ENCODE measurements at regions of chr14 and their contacts with region 1.

Region 1: DNA sequence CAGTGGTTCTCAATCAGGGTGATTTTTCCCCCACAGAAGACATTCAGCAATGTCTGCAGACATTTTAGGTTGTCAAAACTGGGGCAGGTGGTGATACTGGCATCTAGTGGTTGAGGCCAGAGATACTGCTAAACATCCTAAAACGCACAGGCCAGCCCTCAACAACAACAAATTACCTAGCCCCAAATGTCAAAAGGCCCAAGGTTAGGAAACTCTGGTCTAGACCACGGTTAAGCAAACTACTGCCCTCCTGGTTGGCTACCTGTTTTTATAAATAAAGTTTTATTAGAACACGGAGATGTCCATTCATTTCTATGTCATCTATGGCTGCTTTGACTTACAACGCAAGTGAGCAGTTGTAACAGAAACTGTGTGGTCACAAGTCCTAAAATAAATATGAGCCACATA is 186.7 kb downstream of the EFCAB11 start:
- DNase-seq: peak; percentile 46
- H3K4me3 Mint-ChIP-seq: no peak overlapping the region
- H3K27ac Mint-ChIP-seq: peak overlapping the region; percentile 35
- H3K4me1 Mint-ChIP-seq: peaks cover 15% of the 10 kb centered on the region
- H3K27me3 Mint-ChIP-seq: peaks cover 19% of the 10 kb centered on the region

Region 2: DNA sequence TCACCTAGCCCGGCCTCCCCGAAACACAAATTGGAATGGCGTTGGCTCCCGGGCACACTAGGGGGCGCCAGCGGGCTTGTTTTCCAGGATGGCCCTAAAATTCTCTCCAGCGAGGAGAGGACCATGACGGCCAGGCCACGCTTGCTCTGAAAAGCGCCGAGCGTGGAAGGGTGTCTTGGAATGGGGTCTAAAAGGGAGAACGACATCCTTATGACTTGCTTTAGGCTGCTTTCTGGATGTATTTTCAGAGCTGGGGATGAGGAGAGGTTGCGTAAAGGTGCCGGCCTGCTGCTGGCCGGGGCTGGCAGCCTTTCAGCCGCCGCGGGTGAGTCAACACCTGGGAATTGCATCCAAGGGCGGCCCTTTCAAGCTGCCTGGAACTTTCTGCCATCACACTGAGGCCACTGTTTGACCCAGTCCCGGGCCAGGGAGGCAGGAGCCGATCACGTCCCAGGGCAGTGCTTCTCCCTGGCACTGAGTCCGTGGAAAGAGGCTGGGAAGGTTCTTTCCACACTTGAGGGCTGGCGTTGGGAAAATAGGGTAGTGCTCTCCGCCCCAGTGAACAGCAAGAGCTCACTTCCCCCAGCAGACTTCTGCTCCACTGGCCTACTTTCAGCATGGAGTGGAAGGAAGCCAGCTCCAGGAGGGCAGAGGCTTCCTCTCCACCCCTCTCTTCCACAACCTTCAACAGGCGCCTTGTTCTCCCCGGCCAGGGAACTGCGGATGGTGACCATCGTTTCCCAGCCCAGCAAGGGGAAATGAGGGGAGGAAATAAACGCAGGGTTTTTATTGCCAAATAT is 727.2 kb before region 1 on chr14:
- intact Hi-C with region 1: loop called (anchors 1 kb)
- DNase-seq: peak; percentile 63
- H3K4me3 Mint-ChIP-seq: peak overlapping the region; percentile 56
- H3K27ac Mint-ChIP-seq: no peak overlapping the region
- H3K4me1 Mint-ChIP-seq: no peaks in the 10 kb centered on the region
- H3K27me3 Mint-ChIP-seq: peaks cover 18% of the 10 kb centered on the region

Region 3: DNA sequence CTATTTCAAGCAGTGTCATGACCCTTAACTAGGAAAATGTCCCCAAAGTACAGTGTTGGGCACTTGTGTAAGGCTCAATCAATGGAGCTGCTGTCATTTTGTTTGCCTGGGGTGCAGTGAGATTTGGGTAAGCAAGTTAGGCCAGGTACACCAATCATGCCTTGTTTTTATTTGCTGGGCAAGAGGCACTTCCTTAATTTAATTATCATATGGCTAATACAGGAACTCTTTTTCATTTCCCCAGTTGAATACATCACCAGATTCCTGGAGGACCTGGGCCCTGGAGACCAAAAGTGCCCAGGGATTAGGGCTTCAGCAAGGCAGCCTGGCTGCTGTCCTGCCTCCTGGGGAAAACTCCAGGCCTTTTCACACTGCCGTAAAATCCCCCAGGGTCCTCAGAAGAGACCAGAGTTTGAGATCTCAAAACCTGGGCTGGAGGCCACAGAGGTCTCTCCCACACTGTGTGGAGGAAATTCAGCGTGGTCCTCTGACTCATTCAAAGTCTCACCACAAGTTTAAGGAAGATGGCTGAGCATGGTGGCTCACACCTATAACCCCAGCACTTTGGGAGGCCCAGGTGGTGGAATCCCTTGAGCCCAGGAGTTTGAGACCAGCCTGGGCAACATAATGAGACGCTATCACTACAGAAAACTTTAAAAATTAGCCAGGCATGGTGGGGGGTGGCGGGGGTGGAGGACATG is 322.4 kb before region 1 on chr14:
- intact Hi-C with region 1: loop called (anchors 1 kb)
- DNase-seq: peak; percentile 11
- H3K4me3 Mint-ChIP-seq: peak overlapping the region; percentile 37
- H3K27ac Mint-ChIP-seq: peak overlapping the region; percentile 83
- H3K4me1 Mint-ChIP-seq: peaks cover 54% of the 10 kb centered on the region
- H3K27me3 Mint-ChIP-seq: no peaks in the 10 kb centered on the region

Region 4: DNA sequence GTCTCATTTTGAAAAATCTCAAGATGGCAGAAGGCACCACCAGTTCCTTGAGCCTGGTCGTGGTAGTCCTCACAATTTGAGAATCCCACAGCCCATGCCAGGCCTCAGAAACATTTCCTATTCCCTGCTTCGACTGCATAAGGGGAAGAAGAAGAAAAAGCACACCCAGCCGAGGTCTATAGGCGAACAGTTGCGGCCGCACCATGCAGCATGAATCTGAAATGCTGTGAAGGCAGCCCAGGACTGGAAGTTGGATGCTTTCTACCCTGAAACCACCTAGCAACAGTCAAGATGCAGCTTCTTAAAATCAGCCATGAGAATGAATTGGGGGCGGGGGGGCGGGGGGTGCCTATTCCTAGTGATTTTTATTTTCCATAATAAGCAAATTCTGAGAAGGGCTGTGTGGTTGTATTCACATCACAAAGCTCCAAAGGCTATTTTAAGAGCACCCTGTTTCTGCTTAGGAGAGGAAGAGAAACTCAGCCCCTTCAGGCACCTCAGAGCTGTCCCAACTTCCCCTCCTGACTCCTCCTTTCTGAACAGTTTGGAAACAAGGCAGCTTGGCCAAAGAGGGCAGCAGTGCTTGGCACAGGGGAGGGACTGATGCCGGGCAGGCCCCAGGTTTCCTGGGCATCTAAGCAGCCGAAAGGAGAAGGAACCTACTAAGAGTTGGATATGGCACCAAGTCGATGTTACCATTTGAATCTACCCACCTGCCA is 178.3 kb before region 1 on chr14:
- intact Hi-C with region 1: loop called (anchors 5 kb)
- DNase-seq: no peak
- H3K4me3 Mint-ChIP-seq: no peak overlapping the region
- H3K27ac Mint-ChIP-seq: peak overlapping the region; percentile 14
- H3K4me1 Mint-ChIP-seq: peaks cover 52% of the 10 kb centered on the region
- H3K27me3 Mint-ChIP-seq: no peaks in the 10 kb centered on the region

Region 5: DNA sequence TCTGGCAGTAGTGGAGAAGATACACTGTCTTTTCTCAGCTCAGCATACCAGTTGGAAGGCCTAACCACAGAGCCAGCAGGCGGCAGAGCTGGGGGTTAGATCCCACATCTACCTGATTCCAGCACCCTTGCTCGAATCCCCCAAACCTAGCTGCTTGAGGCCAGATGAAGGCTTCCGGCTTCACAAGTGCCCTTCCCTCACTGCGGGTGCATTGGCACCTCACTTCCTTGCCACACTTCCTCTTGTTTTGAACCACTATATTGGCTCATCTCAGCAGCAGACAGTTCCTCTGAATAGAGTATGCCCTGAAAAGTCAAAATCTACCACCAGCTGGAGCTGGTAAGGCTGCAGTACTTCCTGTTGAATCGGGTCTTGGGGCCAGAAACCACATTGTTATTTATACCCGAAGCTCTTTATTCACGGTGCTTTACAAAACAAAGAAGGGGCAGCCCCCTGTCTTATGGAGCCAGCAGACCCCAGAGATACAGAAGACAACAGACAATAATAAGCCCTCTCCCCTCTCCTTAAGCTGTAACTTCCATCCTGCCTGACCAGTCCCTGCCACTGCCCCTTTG is 47.0 kb before region 1 on chr14:
- intact Hi-C with region 1: loop called (anchors 1 kb)
- DNase-seq: peak; percentile 59
- H3K4me3 Mint-ChIP-seq: peak overlapping the region; percentile 49
- H3K27ac Mint-ChIP-seq: peak overlapping the region; percentile 86
- H3K4me1 Mint-ChIP-seq: peaks cover 64% of the 10 kb centered on the region
- H3K27me3 Mint-ChIP-seq: no peaks in the 10 kb centered on the region

Measured in activated T-helper 1 cell treated with anti-CD3 and anti-CD28 coated beads, Interleukin-12 subunit alpha, Interleukin-12 subunit beta, Interleukin-2, Interleukin-4 antibody, amounts not matched to agents 30 ng/mL and 10 ng/mL and 1 ng/mL, durations not matched to agents 14 hours and 24 hours and 36 hours (primary cell).